AG04449 (cell line): ENCODE measurements at regions of chr2 and their contacts with region 1.

Region 1: DNA sequence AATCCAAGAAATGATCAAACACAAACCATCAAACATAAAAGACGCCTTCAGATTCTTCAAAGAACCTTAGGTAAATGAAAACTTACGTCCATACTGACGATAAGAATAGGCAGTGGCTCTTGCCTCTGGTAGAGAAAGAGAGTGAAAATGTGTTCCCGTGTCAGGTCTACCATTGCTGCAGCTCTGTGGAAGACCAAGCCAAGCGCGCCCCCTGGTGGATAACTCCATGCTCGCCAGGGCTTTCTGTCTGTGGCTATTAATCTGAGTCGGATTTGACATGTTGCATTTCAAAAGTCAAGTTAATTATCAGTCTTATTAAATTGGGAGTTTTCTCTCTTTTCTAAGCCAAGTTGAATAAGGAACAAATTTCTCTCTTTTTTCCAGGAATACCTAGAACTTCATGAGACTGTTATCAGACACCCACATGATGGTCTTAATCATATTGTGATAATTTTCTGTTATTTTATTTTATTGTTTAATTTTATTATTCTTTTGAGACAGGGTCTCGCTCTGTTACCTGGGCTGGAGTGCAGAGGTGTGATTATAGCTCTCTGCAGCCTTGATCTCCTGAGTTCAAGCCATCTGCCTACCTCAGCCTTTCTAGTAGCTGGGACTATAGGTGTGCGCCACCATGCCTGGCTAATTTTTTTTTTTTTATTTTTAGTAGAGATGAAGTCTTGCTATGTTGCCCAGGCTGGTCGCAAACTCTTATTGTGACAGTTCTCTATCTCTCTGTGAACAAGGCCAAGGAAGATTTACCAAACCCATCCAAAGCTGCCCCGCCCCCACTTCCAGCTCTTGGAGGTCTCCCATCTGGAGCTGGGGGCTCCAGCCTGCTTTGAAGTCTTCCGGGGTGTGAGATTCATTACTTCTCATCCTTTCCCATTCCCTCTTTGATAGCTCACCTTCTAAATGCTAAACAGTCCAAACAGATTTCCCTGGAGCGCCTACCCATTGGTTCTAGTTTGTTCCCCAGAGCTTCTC is 15.8 kb upstream of the ZAP70 start:
- DNase-seq: peak; percentile 26
- H3K4me3 ChIP-seq: no peak overlapping the region
- CTCF ChIP-seq: peak; percentile 85

Region 2: DNA sequence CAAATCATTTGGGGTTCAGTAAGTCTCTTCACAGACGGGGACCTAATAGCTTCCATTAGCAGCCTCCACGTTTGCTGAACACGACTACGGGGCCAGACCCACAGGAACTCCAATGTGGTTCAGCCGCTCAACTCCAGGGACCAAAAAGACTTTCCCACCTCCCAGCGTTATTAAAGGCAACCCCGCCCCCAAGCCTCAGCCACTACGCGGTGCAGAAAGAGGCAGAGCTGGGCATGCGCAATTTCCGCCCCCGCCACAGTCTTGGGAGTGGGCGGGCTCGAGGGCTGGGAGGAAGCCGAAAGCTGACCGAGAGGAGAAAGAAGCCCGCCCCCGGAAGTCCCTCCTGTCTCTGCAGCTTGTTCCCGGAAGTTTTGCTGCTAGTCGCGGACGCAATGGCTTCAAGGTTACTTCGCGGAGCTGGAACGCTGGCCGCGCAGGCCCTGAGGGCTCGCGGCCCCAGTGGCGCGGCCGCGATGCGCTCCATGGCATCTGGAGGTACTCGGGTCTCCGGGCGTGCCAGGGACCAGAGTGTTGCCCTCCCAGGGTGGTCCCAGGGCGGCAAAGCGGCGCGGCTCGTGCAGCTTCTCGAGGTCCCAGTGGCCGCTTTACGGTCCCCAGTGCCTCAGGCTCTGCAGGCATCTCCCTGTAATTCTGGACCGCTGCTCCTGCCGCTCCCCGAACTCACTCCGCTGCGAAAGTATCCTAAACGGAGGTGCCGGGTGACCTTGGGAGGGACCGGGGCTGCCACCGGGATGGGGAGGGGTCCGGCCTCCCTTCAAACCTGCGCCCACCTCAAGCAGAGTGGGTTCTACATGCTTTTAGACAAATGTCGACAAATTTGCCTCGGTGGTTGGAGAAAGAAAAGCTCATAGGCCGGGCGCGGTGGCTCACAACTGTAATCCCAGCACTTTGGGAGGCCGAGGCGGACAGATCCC is 51.6 kb before region 1 on chr2 and contains the start of gene COX5B:
- CTCF ChIA-PET with region 1: interaction called, 28 read pairs
- POLR2A ChIA-PET with region 1: no interaction called
- DNase-seq: peak; percentile 72
- H3K4me3 ChIP-seq: peak within 1 kb of the TSS; percentile 97
- CTCF ChIP-seq: no peak

Region 3: DNA sequence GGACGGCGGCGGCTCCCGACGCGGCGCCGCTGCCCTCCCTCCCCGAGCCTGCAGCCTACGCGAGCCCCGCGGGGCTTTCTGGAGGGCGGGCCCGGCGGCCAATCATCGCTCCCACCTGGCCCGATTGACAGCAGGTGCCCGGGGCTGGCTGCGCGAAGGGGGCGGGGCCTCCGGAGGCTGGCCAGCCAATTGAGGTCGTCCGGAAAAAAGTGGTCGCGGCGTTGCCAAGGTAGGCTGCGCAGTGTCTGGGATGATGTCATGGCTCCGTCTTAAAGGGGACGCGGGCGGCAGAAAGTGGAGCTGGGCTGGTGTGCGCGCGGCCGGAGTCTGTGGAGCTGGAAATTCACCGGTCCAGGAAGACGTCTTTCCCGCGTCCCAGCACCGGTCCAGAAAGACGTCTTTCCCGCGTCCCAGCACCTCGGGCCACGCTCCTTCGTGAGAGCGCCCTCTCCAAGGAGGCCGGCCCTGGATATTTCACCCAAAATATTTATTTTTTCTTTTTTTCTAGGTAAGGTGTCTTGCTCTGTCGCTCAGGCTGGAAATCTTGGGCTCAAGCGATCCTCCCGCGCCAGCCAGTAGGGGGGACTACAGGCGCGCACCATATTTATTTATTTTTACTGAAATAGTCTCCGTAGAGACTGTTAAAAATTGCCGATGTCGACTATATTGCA is 33.4 kb before region 1 on chr2 and contains the start of gene ACTR1B:
- CTCF ChIA-PET with region 1: interaction called, 87 read pairs
- POLR2A ChIA-PET with region 1: no interaction called
- DNase-seq: peak; percentile 81
- H3K4me3 ChIP-seq: peak within 1 kb of the TSS; percentile 70
- CTCF ChIP-seq: peak; percentile 31

Region 4: GRCh38 chr2:97673182-97673914 is 24.2 kb before region 1 on chr2:
- CTCF ChIA-PET with region 1: interaction called, 59 read pairs
- POLR2A ChIA-PET with region 1: no interaction called
- DNase-seq: no peak
- H3K4me3 ChIP-seq: no peak overlapping the region
- CTCF ChIP-seq: no peak

Region 5: DNA sequence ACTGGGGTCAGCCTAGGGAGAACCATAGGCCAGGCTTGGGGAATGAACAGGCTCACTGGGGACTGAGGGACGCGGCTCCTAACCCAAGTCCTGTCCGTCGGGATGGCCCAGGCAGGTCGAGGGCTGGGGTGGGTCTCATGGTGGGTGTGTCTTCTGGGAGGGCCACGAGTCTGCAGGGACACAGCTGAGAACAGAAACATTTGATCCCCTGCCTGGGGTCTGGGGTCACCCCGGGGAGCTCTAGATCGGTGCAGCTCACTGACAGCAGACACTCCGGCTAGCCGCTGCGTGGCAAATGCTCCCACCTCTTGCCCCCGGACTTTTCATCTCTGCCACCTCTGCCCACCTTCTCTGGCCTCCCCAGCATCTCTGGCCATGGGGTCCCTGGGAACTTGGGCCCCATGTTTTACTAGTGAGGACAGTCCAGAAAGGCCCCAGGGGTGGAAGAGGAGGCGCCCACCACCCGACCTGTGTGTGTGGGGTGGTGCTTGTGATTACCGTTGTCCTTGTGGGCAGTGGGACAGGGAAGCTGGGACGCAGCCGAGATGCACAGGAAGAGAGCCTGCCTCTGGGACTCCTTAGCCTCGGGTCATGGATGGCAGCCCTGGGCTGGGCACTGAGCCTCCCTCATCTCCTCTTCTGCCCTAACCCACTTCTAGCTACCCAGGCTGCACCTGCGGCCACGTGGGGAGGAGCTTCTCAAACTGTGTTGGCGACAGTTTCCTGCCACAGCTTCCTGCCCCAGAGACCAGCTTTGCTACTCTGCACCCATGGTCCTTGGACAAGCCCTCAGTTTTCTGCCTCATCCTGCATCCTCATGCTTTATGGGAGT is 20.7 kb after region 1 on chr2:
- CTCF ChIA-PET with region 1: interaction called, 134 read pairs
- POLR2A ChIA-PET with region 1: no interaction called
- DNase-seq: no peak
- H3K4me3 ChIP-seq: no peak overlapping the region
- CTCF ChIP-seq: no peak

Region 6: DNA sequence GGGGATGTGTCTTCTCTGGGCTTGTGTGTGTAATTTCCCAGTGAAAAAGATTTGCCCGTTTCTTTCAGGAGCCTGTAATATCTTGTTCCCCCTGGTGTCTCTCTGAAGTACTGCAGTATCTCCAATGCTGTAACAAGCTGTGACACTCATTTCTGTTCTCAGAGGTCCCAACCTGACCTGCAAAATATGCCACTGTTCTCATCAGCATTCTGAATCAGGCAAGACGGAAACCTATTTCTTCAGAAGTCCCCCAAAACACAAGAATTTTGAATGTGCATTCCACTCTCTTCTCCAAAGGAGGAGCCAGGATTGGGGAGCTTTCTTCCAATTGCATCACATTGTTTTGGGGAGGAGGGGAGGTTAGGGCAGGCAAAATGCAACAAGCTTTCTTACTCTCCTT is 571.7 kb after region 1 on chr2:
- CTCF ChIA-PET with region 1: interaction called, 34 read pairs
- POLR2A ChIA-PET with region 1: no interaction called
- DNase-seq: peak; percentile 3
- H3K4me3 ChIP-seq: no peak overlapping the region
- CTCF ChIP-seq: peak; percentile 60

Region 7: GRCh38 chr2:98385050-98385699 is 687.6 kb after region 1 on chr2:
- CTCF ChIA-PET with region 1: interaction called, 176 read pairs
- POLR2A ChIA-PET with region 1: no interaction called
- DNase-seq: no peak
- H3K4me3 ChIP-seq: no peak overlapping the region
- CTCF ChIP-seq: peak; percentile 97